ENCODE measurements at regions of chr6 and their contacts with region 1.

Region 1: GRCh38 chr6:43247113-43247999 is 4.1 kb downstream of the TTBK1 start:
- DNase-seq: peak; percentile 85

Region 2: DNA sequence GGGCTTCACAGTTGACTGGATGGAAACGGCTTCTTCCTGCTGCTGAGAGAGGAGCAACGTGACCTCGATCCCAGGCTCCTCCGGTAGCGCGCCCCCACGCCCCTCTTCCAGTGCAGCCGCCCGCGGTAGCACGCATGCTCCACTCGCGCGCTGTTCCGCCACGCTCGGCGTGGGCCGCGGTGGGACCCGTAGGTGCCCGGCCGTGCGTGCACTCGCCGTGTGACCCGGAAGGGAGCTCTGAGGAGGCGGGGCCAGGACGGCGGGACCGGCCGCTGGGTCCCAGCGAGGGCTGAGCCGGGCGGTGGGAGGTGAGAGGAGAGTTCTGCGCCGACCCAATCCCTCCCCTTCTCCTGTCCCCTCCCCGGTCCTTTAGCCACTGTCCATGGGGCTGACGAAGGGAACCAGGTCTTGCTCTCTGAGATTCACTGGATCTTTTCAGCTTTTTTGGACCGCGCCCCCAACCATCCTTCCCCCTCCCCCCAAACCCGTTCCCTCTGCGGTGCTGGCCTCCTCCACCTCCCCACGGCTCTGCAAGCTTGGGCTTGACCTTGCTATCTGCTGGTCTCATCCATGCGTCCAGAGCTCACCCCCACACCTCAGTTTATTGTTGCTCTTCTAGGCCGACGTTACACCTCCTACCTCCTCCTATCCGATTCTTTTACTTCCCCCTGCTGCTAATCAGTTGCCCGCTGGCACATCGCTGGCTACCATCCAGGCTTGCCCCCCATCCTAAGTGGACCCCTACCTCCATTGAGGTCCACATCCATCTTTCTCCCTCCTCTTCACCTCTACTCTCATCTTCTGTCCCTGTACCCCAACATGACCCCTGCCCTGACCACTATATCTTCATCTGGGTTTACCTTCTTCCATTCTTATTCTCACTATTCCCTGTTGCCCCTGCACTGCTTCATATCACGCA is 65.2 kb before region 1 on chr6 and contains the start of gene CUL9:
- intact Hi-C with region 1: loop called (anchors 5 kb)
- DNase-seq: peak; percentile 95
- total RNA-seq, gene CUL9: 15.6 TPM

Region 3: DNA sequence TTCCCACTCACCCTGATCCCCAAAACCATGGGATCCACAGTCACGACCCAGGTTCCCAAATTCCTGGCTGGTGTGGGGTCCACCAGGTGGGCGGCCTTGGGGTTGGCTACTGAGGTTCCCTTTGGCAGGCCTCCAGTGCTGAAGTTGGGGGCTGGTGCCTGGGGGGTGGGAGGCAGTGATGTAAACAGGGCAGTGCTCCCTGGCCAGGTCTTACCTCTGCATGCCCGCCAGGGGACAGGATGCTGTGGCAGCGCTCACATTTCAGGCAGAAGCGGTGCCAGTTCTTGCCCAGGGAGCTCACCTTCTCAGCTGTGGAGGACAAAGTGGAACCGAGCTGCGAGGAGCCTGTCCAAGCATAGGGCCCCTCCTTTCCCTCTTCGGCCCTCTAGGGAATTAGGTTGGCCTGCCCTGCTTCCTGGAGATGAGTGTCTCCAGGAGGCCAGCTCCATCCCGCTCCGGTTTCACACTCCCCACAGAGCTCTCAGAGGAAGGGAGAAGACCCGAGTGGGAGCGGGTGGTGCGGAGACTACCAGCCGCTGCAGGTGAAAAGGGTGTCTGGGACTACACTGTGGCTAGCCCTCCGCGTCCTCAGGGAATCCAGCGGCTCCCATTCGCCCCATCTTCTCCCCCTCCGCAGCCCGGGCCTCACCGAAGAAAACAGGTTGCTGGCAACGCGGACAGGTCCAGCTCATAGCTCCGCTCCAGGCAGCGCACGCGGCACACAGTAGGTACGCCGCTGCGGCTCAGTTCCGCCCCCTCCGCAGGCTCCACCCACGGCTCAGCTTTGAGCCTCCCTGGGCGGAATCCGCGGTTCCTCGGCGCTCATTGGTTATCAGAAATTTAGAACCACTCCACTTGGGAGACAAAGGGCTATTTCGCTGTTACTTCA is 61.0 kb after region 1 on chr6 and contains the start of gene CRIP3:
- intact Hi-C with region 1: no loop called
- DNase-seq: peak; percentile 83
- total RNA-seq, gene CRIP3: 11.2 TPM

Region 4: GRCh38 chr6:43339168-43339567 is 91.8 kb after region 1 on chr6:
- intact Hi-C with region 1: no loop called
- DNase-seq: no peak

Measured in cardiac septum (tissue), 1 donor.